Mammary epithelial cell (primary cell): ENCODE measurements at regions of chr9 and their contacts with region 1.

Region 1: DNA sequence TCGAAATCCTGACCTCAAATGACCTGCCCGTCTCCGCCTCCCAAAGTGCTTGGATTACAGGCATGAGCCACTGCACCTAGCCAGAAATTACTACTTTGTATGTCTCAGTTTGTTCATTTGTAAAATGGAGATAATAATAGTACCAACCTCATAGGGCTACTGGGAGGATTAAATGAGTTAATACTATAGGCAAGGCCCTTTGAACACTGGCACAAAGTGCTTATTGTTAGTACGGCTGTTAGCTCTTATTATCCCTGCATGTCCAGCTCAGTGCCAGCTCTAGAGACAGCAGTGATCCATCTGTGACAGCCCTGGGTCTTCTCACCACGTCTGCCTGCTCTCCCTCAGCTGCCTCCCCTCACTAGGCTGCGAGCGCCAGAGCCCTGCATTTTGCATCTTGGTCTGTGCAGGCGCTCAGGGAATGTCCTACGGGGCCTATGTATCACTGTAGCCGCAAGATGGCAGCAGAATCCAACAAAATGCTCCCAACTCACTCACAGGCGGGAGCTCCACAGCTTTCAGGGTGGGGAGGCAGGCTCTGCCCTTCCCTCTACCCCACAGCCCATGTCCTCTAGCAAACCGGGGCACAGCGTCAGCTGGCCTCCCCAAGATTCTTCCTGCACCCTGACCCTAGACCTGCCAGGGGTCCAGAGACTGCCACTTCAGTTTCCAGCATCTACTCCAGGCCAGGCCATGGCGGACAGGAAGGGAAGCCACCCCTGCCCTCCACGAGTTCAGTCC is 17.7 kb upstream of the AKNA start:
- DNase-seq: peak; percentile 71
- H3K4me3 ChIP-seq: no peak overlapping the region
- H3K27ac ChIP-seq: no peak overlapping the region
- H3K4me1 ChIP-seq: peaks cover 27% of the 10 kb centered on the region
- H3K27me3 ChIP-seq: no peaks in the 10 kb centered on the region
- CTCF ChIP-seq: peak; percentile 86 to 87

Region 2: GRCh38 chr9:114108016-114108833 is 297.2 kb before region 1 on chr9:
- CTCF ChIA-PET with region 1: interaction called, 3 read pairs
- dilution Hi-C with region 1: no loop called
- in situ Hi-C with region 1: no loop called
- intact Hi-C with region 1: loop called (anchors 1 kb)
- DNase-seq: peak; percentile 70
- H3K4me3 ChIP-seq: no peak overlapping the region
- H3K27ac ChIP-seq: no peak overlapping the region
- H3K4me1 ChIP-seq: no peaks in the 10 kb centered on the region
- H3K27me3 ChIP-seq: no peaks in the 10 kb centered on the region
- CTCF ChIP-seq: peak; percentile 97 to 100

Region 3: DNA sequence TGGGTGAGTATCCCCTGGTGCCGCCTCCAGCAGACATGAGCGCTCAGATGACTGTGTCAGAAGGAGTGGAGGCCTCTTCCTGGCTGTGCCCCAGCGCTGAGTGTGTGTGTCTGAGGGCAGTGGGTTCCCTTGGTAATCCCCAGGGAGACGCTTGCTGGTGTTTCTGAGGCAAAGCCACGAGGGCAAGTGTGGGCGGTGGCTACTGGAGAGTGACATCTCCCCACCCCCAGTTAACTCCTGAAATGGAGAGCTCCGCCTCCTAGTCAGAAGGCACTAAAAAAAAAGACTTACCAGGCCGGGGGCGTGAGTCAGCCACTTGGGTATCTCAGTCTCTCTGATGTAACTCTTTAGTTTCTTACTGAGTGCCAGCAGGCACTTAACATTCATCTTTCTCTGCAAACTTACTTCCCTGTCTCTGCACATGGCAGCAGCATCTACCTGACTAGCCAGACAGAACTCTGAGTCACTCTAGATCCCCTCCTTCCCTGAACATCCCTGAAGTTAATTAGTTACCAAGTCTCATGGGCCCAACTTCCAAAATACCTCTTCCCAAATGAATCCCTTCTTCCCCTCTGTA is 56.5 kb before region 1 on chr9:
- CTCF ChIA-PET with region 1: no interaction called
- dilution Hi-C with region 1: loop called (anchors 5 kb)
- in situ Hi-C with region 1: no loop called
- intact Hi-C with region 1: loop called (anchors 2 kb)
- DNase-seq: peak; percentile 95
- H3K4me3 ChIP-seq: no peak overlapping the region
- H3K27ac ChIP-seq: peak overlapping the region; percentile 20
- H3K4me1 ChIP-seq: peaks cover 11% of the 10 kb centered on the region
- H3K27me3 ChIP-seq: no peaks in the 10 kb centered on the region
- CTCF ChIP-seq: no peak

Region 4: DNA sequence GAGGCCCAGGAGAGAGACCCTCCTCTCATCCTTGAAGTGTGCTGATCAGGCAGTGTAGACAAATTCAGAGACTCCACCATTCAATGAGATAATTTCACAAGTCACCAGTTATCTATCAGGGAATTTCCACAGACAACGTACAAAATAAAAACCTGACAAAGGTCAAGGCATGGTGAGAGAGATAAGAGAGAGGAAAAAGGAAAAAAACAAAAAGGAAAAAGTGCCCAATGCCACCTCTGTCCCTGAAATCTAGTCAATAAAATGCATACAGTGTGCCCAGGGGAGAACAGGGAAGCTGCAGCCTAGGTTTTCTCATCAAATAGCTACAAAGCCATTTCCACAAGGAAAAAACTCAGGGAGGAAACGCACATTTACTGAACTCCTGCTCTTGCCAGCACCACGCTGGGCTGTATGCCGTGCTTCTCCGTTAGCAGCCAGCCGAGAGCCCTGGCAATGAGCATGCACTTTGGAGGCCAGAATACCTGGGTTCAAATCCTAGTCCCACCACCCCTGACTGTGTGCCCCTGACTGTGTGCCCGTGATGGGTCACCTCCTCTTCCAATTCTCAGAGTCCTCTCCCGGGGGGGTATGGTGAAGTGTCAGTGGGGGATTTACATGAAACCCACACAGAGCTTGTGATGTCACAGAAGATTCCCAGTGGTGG is 88.2 kb after region 1 on chr9:
- CTCF ChIA-PET with region 1: no interaction called
- dilution Hi-C with region 1: no loop called
- in situ Hi-C with region 1: no loop called
- intact Hi-C with region 1: no loop called
- DNase-seq: no peak
- H3K4me3 ChIP-seq: no peak overlapping the region
- H3K27ac ChIP-seq: no peak overlapping the region
- H3K4me1 ChIP-seq: no peaks in the 10 kb centered on the region
- H3K27me3 ChIP-seq: no peaks in the 10 kb centered on the region
- CTCF ChIP-seq: no peak

Region 5: DNA sequence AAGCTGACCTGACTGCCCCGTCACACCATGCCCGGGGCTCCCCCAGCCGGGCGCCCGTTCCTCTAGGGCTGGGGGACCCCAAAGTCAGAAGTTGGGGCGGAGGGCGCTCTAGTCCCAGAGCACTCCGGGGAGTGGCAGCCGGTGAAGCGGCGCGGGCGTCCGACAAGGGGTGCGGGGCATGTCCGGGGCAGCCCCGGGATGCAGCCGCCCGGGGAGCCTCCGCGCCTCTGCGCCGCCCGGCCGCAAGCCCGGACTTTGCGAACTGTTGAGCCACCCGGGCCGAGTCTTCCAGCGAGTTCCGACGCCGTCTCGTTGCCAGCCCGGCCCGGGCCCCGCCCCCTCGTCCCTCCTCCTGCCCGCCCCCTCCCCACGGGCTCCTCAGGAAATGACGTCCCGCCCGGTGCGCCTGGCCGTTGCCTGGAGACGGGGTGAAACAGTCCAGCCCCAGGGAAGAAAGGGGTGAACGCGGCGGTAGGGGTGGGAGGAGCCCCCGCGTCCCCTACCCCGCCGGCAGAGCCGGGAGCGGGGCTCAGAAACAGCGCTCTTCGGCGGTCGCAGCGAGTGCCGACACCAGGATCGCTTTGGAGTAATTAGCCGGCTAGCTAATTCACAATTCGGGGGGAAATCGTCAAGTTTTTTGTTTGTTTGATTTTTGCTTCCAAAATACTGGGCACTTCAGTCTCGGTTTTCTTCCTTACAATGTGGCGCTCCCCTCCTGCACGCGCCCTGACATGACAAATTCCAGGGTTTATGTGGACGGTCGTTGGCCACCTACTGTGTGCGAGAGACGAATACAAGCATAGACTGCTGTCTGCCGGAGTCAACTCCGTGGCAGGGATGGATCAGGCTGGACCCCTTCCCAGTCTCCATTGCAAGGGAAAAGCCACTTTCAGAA is 100.0 kb after region 1 on chr9 and contains the start of gene WHRN:
- CTCF ChIA-PET with region 1: interaction called, 3 read pairs
- dilution Hi-C with region 1: no loop called
- in situ Hi-C with region 1: no loop called
- intact Hi-C with region 1: loop called (anchors 1 kb)
- DNase-seq: peak; percentile 88
- H3K4me3 ChIP-seq: peak within 1 kb of the TSS; percentile 64 to 79 (median 67)
- H3K27ac ChIP-seq: peak within 1 kb of the TSS; percentile 81
- H3K4me1 ChIP-seq: peaks cover 32% of the 10 kb centered on the region
- H3K27me3 ChIP-seq: no peaks in the 10 kb centered on the region
- CTCF ChIP-seq: no peak
- total RNA-seq, gene WHRN: 3.2 to 9.7 TPM

Region 6: GRCh38 chr9:114653556-114654159 is 248.2 kb after region 1 on chr9:
- CTCF ChIA-PET with region 1: interaction called, 8 read pairs
- dilution Hi-C with region 1: no loop called
- in situ Hi-C with region 1: loop called in 1 of 2 experiments (anchors 10 kb)
- intact Hi-C with region 1: loop called (anchors 1 kb)
- DNase-seq: peak; percentile 60
- H3K4me3 ChIP-seq: no peak overlapping the region
- H3K27ac ChIP-seq: no peak overlapping the region
- H3K4me1 ChIP-seq: peaks cover 3% of the 10 kb centered on the region
- H3K27me3 ChIP-seq: no peaks in the 10 kb centered on the region
- CTCF ChIP-seq: peak; percentile 89 to 97

Region 7: GRCh38 chr9:114738581-114739316 is 333.3 kb after region 1 on chr9:
- CTCF ChIA-PET with region 1: no interaction called
- dilution Hi-C with region 1: no loop called
- in situ Hi-C with region 1: no loop called
- intact Hi-C with region 1: loop called (anchors 1 kb)
- DNase-seq: peak; percentile 78
- H3K4me3 ChIP-seq: no peak overlapping the region
- H3K27ac ChIP-seq: no peak overlapping the region
- H3K4me1 ChIP-seq: peaks cover 5% of the 10 kb centered on the region
- H3K27me3 ChIP-seq: no peaks in the 10 kb centered on the region
- CTCF ChIP-seq: peak; percentile 71 to 81

Region 8: GRCh38 chr9:115013998-115014397 is 608.5 kb after region 1 on chr9:
- CTCF ChIA-PET with region 1: no interaction called
- dilution Hi-C with region 1: no loop called
- in situ Hi-C with region 1: no loop called
- intact Hi-C with region 1: loop called (anchors 1 kb)
- DNase-seq: peak; percentile 57
- H3K4me3 ChIP-seq: no peak overlapping the region
- H3K27ac ChIP-seq: no peak overlapping the region
- H3K4me1 ChIP-seq: peaks cover under 1% of the 10 kb centered on the region
- H3K27me3 ChIP-seq: no peaks in the 10 kb centered on the region
- CTCF ChIP-seq: peak; percentile 74 to 83